GM12878 (cell line): ENCODE measurements at regions of chr14 and their contacts with region 1.

Region 1: DNA sequence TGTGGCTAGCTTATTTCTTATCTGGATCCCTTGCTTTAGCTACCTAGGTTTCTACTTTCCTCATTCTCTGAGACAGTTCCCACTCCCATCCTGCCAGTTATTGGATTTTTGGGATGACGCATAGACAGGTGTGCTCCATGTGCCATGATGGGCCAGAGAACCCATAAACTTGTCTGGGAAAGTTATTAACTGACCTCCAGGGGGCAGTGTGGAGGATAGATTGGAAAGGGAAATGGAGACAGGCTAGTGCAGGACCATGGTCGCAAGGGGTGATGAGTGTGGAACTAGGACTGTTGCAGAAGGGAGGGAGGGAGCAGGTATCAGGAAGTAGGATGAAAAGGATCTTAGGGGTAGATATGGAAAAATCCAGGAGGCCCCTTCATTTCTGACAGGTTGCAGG is 80.3 kb downstream of the ESRRB start:
- DNase-seq: peak; percentile 7
- ATAC-seq: peak; percentile 84
- H3K4me3 ChIP-seq: no peak overlapping the region
- H3K27ac ChIP-seq: no peak overlapping the region
- H3K4me1 ChIP-seq: no peaks in the 10 kb centered on the region
- H3K27me3 ChIP-seq: no peaks in the 10 kb centered on the region; a peak in 1 of 4 replicates
- CTCF ChIP-seq: peak; percentile 46 to 64 (median 56)
- EP300 ChIP-seq: no peak
- POLR2A ChIP-seq: no peak
- RAD21 ChIP-seq: 0 out of 2 replicates have a peak, but pooled peaks have one; percentile 29

Region 2: DNA sequence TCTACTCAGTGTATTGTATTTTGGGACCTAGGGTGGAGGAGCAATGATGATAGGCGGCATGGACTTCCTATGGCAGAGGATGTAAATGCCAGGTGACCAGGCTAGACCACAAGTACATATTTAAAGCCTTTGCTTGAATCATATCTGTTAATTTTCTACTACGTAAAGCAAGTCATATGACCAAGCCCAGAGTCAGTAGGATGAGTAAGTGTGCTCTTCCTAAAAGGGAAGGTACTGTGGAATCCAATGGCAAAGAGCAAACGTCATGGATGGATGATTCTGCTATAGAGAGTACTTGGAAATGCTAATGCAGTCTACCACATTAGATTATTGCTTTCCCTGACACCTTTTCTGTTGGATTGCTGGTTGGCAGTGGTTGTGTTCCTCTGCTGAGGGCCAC is 287.7 kb before region 1 on chr14:
- CTCF ChIA-PET with region 1: no interaction called
- POLR2A ChIA-PET with region 1: no interaction called
- RAD21 ChIA-PET with region 1: no interaction called
- SMC1A ChIA-PET with region 1: no interaction called
- in situ Hi-C with region 1: no loop called
- intact Hi-C with region 1: no loop called
- DNase-seq: no peak
- ATAC-seq: peak; percentile 24; the same call in 1 of the 3 replicates
- H3K4me3 ChIP-seq: no peak overlapping the region
- H3K27ac ChIP-seq: no peak overlapping the region
- H3K4me1 ChIP-seq: no peaks in the 10 kb centered on the region
- H3K27me3 ChIP-seq: no peaks in the 10 kb centered on the region
- CTCF ChIP-seq: no peak
- EP300 ChIP-seq: no peak
- POLR2A ChIP-seq: no peak
- RAD21 ChIP-seq: no peak

Region 3: GRCh38 chr14:76329154-76329928 is 126.9 kb before region 1 on chr14:
- CTCF ChIA-PET with region 1: no interaction called
- POLR2A ChIA-PET with region 1: no interaction called
- RAD21 ChIA-PET with region 1: no interaction called
- SMC1A ChIA-PET with region 1: no interaction called
- in situ Hi-C with region 1: no loop called
- intact Hi-C with region 1: no loop called
- DNase-seq: no peak
- ATAC-seq: no peak; the same call in 2 of the 3 replicates
- H3K4me3 ChIP-seq: no peak overlapping the region
- H3K27ac ChIP-seq: no peak overlapping the region
- H3K4me1 ChIP-seq: no peaks in the 10 kb centered on the region
- H3K27me3 ChIP-seq: peaks cover 0 to 10% of the 10 kb centered on the region in 2 experiments
- CTCF ChIP-seq: no peak
- EP300 ChIP-seq: no peak
- POLR2A ChIP-seq: no peak
- RAD21 ChIP-seq: no peak

Region 4: GRCh38 chr14:76473481-76474263 is 17.5 kb after region 1 on chr14:
- CTCF ChIA-PET with region 1: interaction called, 15 read pairs
- POLR2A ChIA-PET with region 1: no interaction called
- RAD21 ChIA-PET with region 1: interaction called, 3 read pairs
- SMC1A ChIA-PET with region 1: no interaction called
- in situ Hi-C with region 1: no loop called
- intact Hi-C with region 1: no loop called
- DNase-seq: no peak
- ATAC-seq: peak; percentile 45; the same call in 1 of the 3 replicates
- H3K4me3 ChIP-seq: no peak overlapping the region
- H3K27ac ChIP-seq: no peak overlapping the region
- H3K4me1 ChIP-seq: no peaks in the 10 kb centered on the region
- H3K27me3 ChIP-seq: no peaks in the 10 kb centered on the region
- CTCF ChIP-seq: no peak
- EP300 ChIP-seq: no peak
- POLR2A ChIP-seq: no peak
- RAD21 ChIP-seq: no peak

Region 5: DNA sequence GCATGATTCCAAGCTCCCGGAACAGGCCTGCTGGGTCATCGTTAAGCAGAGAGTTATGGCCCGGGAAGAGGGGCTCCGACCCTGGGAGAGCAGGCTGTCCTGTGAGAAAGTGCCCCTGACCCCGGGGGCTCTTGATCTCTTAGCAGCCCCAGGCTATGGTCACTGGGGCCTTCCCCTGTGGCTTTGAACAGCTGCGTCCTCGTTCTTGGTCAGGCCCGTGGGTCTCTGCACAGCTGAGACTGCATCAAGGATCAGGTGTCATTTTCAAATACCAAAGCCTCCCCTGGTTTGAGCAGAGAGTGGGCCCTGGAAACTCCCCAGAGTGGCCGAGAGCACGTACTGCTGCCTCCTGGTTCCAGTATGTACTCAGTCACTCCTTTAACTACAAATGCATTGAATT is 34.5 kb after region 1 on chr14:
- CTCF ChIA-PET with region 1: interaction called, 18 read pairs
- POLR2A ChIA-PET with region 1: no interaction called
- RAD21 ChIA-PET with region 1: interaction called, 3 read pairs
- SMC1A ChIA-PET with region 1: no interaction called
- in situ Hi-C with region 1: no loop called
- intact Hi-C with region 1: no loop called
- DNase-seq: peak; percentile 17
- ATAC-seq: peak; percentile 85
- H3K4me3 ChIP-seq: no peak overlapping the region
- H3K27ac ChIP-seq: no peak overlapping the region
- H3K4me1 ChIP-seq: no peaks in the 10 kb centered on the region
- H3K27me3 ChIP-seq: no peaks in the 10 kb centered on the region
- CTCF ChIP-seq: no peak
- EP300 ChIP-seq: peak; percentile 28 to 63; a peak in 2 of 4 replicates
- POLR2A ChIP-seq: no peak
- RAD21 ChIP-seq: no peak

Region 6: GRCh38 chr14:76647697-76648298 is 191.6 kb after region 1 on chr14:
- CTCF ChIA-PET with region 1: interaction called, 38 read pairs
- POLR2A ChIA-PET with region 1: no interaction called
- RAD21 ChIA-PET with region 1: interaction called, 3 read pairs
- SMC1A ChIA-PET with region 1: interaction called, 3 read pairs
- in situ Hi-C with region 1: loop called (anchors 5 kb)
- intact Hi-C with region 1: loop called (anchors 1 kb)
- DNase-seq: no peak
- ATAC-seq: peak; percentile 94
- H3K4me3 ChIP-seq: no peak overlapping the region
- H3K27ac ChIP-seq: no peak overlapping the region
- H3K4me1 ChIP-seq: no peaks in the 10 kb centered on the region
- H3K27me3 ChIP-seq: no peaks in the 10 kb centered on the region
- CTCF ChIP-seq: peak; percentile 75 to 88 (median 87)
- EP300 ChIP-seq: no peak
- POLR2A ChIP-seq: no peak
- RAD21 ChIP-seq: peak; percentile 71